MCF 10A (cell line): ENCODE measurements at regions of chr17 and their contacts with region 1.

Region 1: DNA sequence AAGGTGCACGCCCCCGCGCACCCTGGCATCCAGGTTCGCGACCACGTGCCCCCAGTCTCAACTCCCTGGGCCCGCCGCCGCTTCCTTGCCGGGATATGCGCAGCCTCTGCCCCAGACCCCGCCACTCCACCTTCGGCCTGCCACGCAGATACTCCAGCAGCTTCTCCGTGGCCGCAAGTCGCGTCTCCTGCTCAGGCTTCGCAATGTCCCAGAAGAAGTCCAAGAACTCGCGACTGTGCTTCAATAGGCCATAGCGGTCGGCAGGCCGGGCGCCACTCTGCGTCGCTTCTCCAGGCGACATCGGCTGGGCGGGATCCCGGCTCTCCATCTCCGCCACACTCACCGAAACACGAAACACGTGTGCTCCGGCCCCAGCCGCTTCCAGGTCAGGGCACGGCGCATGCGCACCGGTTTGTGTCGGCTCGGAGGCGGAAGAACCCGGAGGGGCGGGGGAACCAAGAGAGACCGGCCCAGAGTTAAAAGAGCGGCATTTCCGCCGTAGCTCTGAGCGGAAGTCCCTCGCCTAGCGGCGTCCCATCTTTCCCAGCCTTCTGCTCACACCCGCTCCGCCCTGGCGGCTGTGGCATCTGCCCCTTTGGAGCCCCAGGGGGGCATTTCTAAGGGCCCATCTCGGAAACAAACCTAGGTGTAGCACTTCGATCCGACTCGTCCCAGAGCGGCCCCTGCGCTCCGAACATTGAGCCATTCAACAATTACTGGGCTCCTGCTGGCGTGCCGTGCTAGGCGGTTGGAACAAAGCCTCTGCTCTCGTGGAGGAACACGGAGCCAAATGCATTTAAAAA is at the start of gene MYBBP1A:
- DNase-seq: peak; percentile 95
- H3K4me3 Mint-ChIP-seq: peak within 1 kb of the TSS; percentile 80
- H3K27ac Mint-ChIP-seq: peak within 1 kb of the TSS; percentile 75
- H3K4me1 Mint-ChIP-seq: peaks cover 9% of the 10 kb centered on the region
- H3K27me3 Mint-ChIP-seq: no peaks in the 10 kb centered on the region
- CTCF ChIP-seq: no peak
- total RNA-seq, gene MYBBP1A: 78.3 and 123 TPM in 2 replicates

Region 2: GRCh38 chr17:4536742-4537411 is 18.3 kb before region 1 on chr17:
- CTCF ChIA-PET with region 1: interaction called, 4 read pairs
- POLR2A ChIA-PET with region 1: interaction called, 15 read pairs
- intact Hi-C with region 1: no loop called
- DNase-seq: no peak
- H3K4me3 Mint-ChIP-seq: no peak overlapping the region
- H3K27ac Mint-ChIP-seq: no peak overlapping the region
- H3K4me1 Mint-ChIP-seq: peaks cover 5% of the 10 kb centered on the region
- H3K27me3 Mint-ChIP-seq: peaks cover 7% of the 10 kb centered on the region
- CTCF ChIP-seq: no peak

Region 3: DNA sequence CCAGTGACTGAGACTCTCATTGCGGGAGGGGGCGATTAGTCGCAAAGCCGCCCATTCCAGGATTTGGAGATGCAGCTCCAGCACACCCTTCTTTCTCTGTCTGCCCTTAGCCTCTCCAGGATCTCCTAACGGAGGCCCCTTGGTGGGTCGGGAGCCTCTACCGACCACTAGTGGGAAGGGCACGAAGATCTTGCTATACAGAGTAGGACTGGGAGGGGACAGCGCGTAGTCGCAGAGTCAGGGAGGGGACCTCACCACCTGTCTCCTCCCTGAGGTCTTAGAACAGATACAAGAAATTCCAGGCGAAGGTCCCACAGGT is 28.5 kb after region 1 on chr17:
- CTCF ChIA-PET with region 1: no interaction called
- POLR2A ChIA-PET with region 1: no interaction called
- intact Hi-C with region 1: no loop called
- DNase-seq: no peak
- H3K4me3 Mint-ChIP-seq: no peak overlapping the region
- H3K27ac Mint-ChIP-seq: no peak overlapping the region
- H3K4me1 Mint-ChIP-seq: peaks cover 7% of the 10 kb centered on the region
- H3K27me3 Mint-ChIP-seq: peaks cover 60% of the 10 kb centered on the region
- CTCF ChIP-seq: no peak